SK-N-SH (cell line): ENCODE measurements at regions of chr4 and their contacts with region 1.

Region 1: DNA sequence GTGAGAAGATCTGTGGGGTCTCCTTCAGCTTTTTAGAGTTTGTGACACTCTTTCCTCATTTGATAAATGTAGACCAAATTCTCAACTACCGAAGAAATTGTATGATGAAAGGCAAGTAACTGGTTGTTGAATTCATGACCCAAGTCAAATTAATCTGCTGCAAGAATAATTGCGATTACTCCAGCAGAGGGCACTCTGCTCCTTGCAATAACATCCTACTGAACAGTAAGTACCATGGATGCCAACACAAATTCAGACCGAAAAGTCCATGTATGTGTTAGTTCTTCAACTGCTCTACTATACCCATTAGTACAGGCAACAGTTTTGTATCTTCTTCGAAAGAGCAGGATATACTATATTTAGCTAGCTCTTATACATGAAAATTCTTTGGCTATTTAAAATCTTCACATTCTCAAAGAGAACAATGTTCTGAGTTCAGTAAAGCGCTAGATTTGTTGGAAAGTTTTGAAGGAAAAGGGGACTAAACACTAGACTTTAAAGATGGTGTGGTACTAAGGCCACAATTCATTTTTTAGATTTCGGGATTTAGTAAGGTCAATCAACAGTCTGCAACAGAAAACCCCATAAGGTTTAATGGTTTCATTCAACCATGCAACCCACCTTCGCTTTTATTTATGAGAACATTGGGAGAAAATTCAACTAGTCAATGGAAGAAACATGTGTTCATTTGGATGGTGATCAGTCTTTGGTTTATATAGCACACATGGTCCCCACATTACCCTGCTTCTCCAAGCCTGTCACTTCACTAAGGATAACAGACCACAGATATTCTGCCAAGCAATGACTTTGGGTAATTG is 105.4 kb upstream of the TBC1D9 start:
- DNase-seq: peak; percentile 47
- H3K4me3 ChIP-seq: no peak overlapping the region
- H3K27ac ChIP-seq: peak overlapping the region in 1 of 2 experiments; percentile 67; a peak in 2 of 4 replicates
- H3K4me1 ChIP-seq: peaks cover 0 to 30% of the 10 kb centered on the region in 2 experiments; a peak in 2 of 4 replicates
- H3K27me3 ChIP-seq: no peaks in the 10 kb centered on the region
- CTCF ChIP-seq: peak; percentile 86
- EP300 ChIP-seq: no peak
- RAD21 ChIP-seq: peak; percentile 99

Region 2: DNA sequence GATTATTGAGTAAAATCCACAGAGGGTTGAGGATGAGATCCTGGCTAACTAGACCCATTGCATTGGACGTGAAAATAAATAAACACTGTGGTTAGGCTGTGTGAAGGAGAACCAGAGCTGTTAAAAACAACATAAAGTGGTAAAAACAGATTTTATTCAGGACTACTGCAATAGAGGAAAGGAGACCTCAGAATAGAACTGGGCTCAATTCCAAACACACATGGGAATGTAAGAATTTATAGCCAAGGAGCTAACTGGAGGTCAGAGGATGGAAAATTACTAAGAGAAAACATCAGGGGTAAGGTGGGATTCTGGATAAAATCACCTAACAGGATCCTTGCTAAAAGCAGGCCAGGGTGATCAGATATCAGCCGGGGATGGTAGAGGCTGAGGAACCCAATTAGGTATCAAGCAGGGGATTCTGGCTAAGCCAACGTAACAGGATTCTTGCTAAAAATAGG is 159.3 kb after region 1 on chr4:
- CTCF ChIA-PET with region 1: interaction called, 15 read pairs
- POLR2A ChIA-PET with region 1: no interaction called
- DNase-seq: no peak
- H3K4me3 ChIP-seq: peak overlapping the region in 1 of 2 experiments; percentile 9; a peak in 1 of 4 replicates
- H3K27ac ChIP-seq: peak overlapping the region; percentile 84 to 100
- H3K4me1 ChIP-seq: peaks cover 28 to 65% of the 10 kb centered on the region in 2 experiments
- H3K27me3 ChIP-seq: no peaks in the 10 kb centered on the region
- CTCF ChIP-seq: no peak
- EP300 ChIP-seq: peak; percentile 68 to 74
- RAD21 ChIP-seq: no peak